AG04449 (cell line): ENCODE measurements at regions of chr16 and their contacts with region 1.

Region 1: DNA sequence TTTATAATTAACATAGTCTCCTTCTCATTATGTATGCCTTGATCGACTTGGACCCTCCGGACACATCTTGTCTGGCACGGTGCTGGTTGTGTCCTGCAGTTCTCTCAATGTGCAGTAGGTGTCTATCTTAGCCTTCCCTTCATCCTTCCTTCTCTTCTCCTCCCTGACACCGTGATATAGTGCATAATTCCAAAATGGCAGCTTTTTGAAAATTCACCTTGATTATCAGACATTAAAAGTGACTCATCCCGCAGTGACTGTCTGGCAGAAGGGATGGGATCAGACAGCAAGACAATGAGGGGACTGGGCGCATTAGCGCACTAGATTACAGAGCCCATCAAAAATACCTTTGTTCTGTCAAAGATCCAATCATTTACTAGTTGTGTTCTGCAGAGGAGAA is 70.0 kb upstream of the PMFBP1 start:
- DNase-seq: no peak
- H3K4me3 ChIP-seq: no peak overlapping the region
- CTCF ChIP-seq: peak; percentile 83

Region 2: GRCh38 chr16:72149676-72150464 is 92.1 kb before region 1 on chr16:
- CTCF ChIA-PET with region 1: no interaction called
- POLR2A ChIA-PET with region 1: no interaction called
- DNase-seq: no peak
- H3K4me3 ChIP-seq: no peak overlapping the region
- CTCF ChIP-seq: no peak

Region 3: GRCh38 chr16:72210555-72210954 is 31.4 kb before region 1 on chr16:
- CTCF ChIA-PET with region 1: no interaction called
- POLR2A ChIA-PET with region 1: no interaction called
- DNase-seq: no peak
- H3K4me3 ChIP-seq: no peak overlapping the region
- CTCF ChIP-seq: no peak

Region 4: DNA sequence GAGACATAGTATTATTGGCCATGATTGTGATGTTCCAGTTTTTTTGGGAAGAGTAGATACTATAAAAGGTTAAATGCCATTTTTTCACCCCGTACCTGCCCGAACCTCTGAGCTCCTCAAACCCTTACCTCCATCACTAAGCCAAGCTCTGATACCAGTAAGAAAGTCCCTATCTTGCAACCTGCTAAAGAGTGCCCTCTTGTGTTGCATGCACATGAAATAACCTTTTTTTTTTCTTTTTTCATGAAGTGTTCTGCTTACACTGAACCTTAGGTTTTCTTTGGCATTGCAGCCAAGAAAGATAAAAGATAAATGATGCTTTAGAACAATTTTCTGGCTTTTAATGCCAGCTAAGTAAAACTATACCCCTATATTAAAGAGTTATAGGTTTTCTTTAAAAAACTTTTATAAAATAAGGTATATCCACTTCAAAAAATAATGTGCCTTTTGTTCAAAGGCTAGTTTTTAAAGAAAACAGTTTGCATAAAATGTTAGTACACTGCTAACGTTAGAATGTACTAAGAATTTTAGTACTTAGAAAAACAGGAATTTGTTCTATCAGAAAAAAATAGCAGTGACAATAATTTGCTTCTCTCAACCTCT is 225.3 kb after region 1 on chr16:
- CTCF ChIA-PET with region 1: interaction called, 139 read pairs
- POLR2A ChIA-PET with region 1: no interaction called
- DNase-seq: peak; percentile 10
- H3K4me3 ChIP-seq: no peak overlapping the region
- CTCF ChIP-seq: peak; percentile 56

Region 5: DNA sequence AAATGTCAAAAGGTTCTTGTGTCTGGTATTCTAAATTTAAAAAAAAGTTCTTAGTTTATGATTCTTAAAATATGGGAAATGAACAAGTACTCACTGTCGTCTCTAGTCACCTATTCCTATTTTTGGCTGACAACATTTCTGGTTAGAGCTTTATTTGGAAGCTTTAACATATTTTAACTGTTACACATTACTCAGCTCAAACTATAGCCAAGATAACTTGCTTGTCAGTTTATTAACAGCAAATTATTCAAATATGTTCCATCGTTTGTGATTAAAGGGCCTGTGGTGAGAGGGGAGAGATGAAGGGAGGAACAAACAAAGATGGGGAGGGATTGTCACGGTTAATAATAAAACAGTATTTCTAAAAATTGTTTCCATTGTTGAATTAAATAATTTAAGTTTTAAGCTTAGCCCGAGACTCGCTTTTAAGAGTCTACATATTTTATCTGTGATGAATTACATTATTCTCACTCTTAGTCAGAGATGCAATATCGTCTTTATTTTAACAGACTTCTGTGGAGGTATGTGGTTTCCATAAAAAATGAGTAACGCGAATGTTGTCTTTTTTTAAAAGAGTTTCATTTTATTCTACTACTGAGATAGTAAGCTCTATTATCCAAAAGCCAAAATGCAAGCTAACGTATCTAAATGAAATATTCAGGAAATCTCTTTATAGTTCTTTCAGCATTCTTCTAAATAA is 251.9 kb after region 1 on chr16:
- CTCF ChIA-PET with region 1: interaction called, 12 read pairs
- POLR2A ChIA-PET with region 1: no interaction called
- DNase-seq: peak; percentile 34
- H3K4me3 ChIP-seq: peak overlapping the region; percentile 34
- CTCF ChIP-seq: no peak

Region 6: DNA sequence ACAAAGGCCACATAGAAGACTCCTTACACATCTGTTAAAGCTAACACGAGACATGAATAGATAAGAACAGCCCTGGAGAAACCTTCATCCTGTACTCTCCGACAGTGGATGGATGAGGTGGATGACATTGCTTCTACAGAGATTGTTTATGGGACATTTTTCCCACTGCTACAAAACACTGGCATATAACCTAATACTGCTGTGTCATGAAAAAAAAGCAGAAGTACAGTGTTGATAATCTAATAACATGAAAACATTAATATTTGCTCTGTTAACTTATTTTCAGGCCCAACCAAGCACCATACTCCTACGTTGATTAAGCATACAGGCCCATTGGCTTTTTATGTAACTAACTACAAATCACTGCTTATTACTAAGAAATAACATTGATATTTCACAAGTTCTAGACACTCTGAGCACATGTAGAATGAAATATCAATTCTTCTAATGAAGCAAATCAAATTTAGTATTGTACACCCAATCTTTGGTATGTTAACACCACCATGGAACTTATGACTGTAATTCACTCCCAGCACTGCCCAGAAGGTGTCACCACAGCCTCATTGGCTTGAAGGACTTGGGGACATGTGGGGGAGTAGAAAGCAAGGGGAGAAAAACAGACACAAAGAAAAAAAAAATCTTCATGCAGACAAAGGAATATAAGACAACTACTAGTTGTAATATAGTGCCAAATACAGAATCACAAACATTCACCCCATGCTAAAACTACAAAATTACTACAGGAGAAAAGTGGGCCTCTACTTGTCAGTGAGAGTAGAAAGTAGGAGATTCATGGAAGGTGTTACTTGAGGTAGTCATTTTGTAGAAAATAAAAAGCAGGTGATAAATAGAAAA is 260.0 kb after region 1 on chr16:
- CTCF ChIA-PET with region 1: interaction called, 10 read pairs
- POLR2A ChIA-PET with region 1: no interaction called
- DNase-seq: peak; percentile 19
- H3K4me3 ChIP-seq: no peak overlapping the region
- CTCF ChIP-seq: peak; percentile 82